ENCODE measurements at regions of chr6 and their contacts with region 1.

Region 1: GRCh38 chr6:33694401-33694931 is 17.0 kb downstream of the UQCC2 start:
- DNase-seq: peak; percentile 22 to 81 (median 73)
- ATAC-seq: peak; percentile 63
- H3K4me3 ChIP-seq: no peak overlapping the region
- H3K4me3 Mint-ChIP-seq: peak overlapping the region; percentile 69
- H3K27ac ChIP-seq: peak overlapping the region; percentile 37 to 81
- H3K27ac Mint-ChIP-seq: peak overlapping the region; percentile 97
- H3K4me1 ChIP-seq: peaks cover 64% of the 10 kb centered on the region
- H3K4me1 Mint-ChIP-seq: peaks cover 62% of the 10 kb centered on the region
- H3K27me3 ChIP-seq: no peaks in the 10 kb centered on the region
- H3K27me3 Mint-ChIP-seq: no peaks in the 10 kb centered on the region
- CTCF ChIP-seq: no peak

Region 2: DNA sequence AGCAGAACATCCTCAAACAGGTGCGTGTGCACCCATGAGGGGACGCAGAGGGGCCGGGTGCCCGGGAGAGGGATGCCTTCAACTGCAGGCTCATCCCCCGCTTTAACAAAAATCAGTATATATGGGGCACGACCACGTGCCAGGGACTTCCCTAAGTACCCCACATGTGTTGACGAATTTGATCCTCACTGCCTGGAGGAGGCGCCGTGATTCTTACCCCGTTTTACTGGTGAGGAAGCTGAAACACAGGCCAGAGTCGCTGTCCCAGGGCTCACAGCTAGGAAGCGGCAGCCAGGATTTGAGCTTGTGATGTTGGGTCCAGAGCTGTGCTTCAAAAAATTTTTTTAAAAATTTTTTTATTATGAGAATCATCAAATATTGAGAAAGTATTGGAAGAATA is 28.5 kb before region 1 on chr6:
- CTCF ChIA-PET with region 1: no interaction called
- POLR2A ChIA-PET with region 1: no interaction called
- intact Hi-C with region 1: no loop called
- DNase-seq: no peak
- ATAC-seq: no peak
- H3K4me3 ChIP-seq: no peak overlapping the region
- H3K4me3 Mint-ChIP-seq: no peak overlapping the region
- H3K27ac ChIP-seq: no peak overlapping the region
- H3K27ac Mint-ChIP-seq: no peak overlapping the region
- H3K4me1 ChIP-seq: no peaks in the 10 kb centered on the region
- H3K4me1 Mint-ChIP-seq: no peaks in the 10 kb centered on the region
- H3K27me3 ChIP-seq: no peaks in the 10 kb centered on the region
- H3K27me3 Mint-ChIP-seq: no peaks in the 10 kb centered on the region
- CTCF ChIP-seq: no peak

Region 3: DNA sequence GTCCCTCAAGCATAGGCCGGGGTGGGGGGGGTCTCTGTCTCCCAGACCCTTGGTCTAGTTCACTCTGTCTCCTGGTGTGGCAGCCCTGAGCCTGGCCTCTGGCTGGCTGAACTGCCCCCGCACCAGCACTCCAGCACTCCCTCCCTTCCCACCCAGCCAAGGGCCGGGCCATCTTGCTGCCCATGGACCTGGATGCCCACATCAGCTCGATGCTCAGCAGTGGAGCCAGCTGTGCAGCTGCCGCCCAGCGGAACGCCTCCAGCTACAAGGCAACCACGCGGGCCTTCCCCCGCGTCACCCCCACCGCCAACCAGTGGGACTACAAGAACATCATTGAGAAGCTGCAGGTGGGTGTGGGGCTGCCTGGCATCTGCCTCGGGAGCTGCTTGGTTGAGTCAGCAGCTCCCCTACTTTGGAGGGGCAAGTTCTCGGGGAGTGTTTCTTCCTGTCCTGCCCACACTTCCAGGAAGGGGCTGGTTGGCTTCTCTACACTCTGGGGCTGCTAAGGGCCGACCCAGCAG is 11.4 kb before region 1 on chr6:
- CTCF ChIA-PET with region 1: interaction called, 3 read pairs
- POLR2A ChIA-PET with region 1: interaction called, 10 read pairs
- intact Hi-C with region 1: no loop called
- DNase-seq: peak in 6 of 9 experiments; percentile 24 to 75 (median 41)
- ATAC-seq: peak; percentile 86
- H3K4me3 ChIP-seq: no peak overlapping the region
- H3K4me3 Mint-ChIP-seq: no peak overlapping the region
- H3K27ac ChIP-seq: no peak overlapping the region
- H3K27ac Mint-ChIP-seq: peak overlapping the region; percentile 55
- H3K4me1 ChIP-seq: peaks cover 9% of the 10 kb centered on the region
- H3K4me1 Mint-ChIP-seq: peaks cover 14% of the 10 kb centered on the region
- H3K27me3 ChIP-seq: no peaks in the 10 kb centered on the region
- H3K27me3 Mint-ChIP-seq: no peaks in the 10 kb centered on the region
- CTCF ChIP-seq: no peak

Region 4: DNA sequence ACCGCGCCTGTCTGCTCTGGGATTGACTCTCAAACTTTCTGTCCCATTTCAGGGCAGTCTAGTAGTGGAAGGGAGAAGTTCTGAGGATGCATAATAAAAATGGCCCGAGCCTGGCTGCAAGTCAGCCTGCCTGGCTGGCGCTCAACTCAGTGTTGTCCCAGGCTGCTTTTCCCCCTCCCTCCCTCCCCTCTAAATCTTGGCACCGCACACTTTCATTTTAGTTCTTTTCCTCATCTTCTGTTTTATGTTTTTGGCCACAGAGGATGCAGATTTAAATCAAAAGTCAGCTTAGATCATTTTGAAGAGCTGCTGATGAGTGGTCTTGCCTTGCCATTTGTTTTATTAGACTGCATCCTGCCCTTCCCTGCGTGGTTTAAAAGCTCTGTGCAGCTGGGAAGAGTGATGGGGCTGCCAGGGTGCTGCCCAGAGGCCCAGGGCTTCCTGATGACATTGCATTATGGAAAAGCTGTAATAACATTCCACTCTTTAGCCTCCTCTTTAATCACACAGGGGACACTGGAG is 23.5 kb after region 1 on chr6:
- CTCF ChIA-PET with region 1: no interaction called
- POLR2A ChIA-PET with region 1: no interaction called
- intact Hi-C with region 1: no loop called
- DNase-seq: no peak
- ATAC-seq: no peak
- H3K4me3 ChIP-seq: no peak overlapping the region
- H3K4me3 Mint-ChIP-seq: no peak overlapping the region
- H3K27ac ChIP-seq: no peak overlapping the region
- H3K27ac Mint-ChIP-seq: no peak overlapping the region
- H3K4me1 ChIP-seq: no peaks in the 10 kb centered on the region
- H3K4me1 Mint-ChIP-seq: no peaks in the 10 kb centered on the region
- H3K27me3 ChIP-seq: no peaks in the 10 kb centered on the region
- H3K27me3 Mint-ChIP-seq: peaks cover 16% of the 10 kb centered on the region
- CTCF ChIP-seq: no peak

Measured in CD8-positive, alpha-beta T cell (primary cell).